ENCODE measurements at regions of chr17 and their contacts with region 1.

Region 1: DNA sequence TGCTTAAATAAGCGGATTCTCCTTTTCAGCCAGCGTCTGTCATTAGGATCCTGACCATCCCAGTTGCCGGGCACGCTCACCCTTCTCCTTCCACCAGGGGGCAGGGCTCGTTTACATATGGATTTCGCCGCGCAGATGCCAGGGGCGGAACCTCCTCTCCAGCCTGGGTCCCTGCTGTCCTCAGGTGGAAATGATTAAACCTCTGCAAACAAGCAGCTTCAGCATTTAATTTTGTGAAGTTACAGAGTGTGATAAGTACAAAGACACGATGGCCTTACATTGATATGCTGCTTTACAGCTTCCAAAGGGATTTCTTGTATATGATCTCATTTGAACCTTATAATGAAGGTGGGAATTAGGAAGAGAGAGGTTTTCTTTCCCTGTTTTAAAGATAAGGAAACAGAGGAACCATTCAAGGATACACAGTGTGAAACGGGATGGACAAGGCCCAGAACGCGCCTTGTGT is 3.9 kb upstream of the KRT28 start:
- DNase-seq: peak; percentile 47 to 88 (median 73)
- ATAC-seq: peak; percentile 100
- H3K4me3 ChIP-seq: no peak overlapping the region
- H3K27ac ChIP-seq: no peak overlapping the region
- H3K4me1 ChIP-seq: no peaks in the 10 kb centered on the region
- H3K27me3 ChIP-seq: peaks cover 20 to 82% of the 10 kb centered on the region in 2 donors
- CTCF ChIP-seq: peak; percentile 61 to 91

Region 2: DNA sequence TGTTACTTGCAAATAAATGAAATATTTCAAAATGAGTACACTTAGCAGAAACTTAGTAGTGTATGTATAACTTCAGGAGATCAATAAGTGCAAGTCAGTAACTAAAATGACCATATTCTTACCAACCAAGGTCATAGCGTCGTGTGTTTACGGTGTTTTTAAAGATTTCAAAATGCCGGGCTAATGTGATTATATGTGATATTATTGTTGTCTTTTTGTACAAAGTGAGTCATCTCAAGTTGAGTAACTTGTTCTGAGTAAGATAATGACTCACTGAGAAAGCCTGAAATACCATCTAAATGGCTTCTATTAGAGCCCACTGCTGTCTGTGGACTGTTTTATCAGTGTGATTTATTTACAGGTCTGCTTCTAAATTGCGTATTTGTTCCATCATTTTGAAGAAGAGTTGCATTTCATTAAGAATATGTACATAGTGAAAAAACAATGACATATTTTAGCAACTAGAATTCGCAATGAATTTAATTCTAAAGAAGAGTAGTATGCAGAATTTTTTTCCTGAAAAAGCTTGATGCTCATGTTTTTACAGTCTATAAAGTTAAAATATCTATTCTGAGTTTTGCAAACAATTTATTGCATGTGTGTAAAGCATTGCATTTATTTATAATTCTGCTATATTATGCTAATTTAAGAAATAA is 50.6 kb after region 1 on chr17:
- intact Hi-C with region 1: no loop called
- DNase-seq: no peak
- ATAC-seq: peak; percentile 73
- H3K4me3 ChIP-seq: no peak overlapping the region
- H3K27ac ChIP-seq: no peak overlapping the region
- H3K4me1 ChIP-seq: peaks cover 0 to 9% of the 10 kb centered on the region in 2 donors
- H3K27me3 ChIP-seq: no peaks in the 10 kb centered on the region
- CTCF ChIP-seq: no peak

Region 3: GRCh38 chr17:41665566-41666236 is 862.1 kb after region 1 on chr17:
- intact Hi-C with region 1: loop called in 1 of 2 experiments (anchors 10 kb)
- DNase-seq: peak in 3 of 4 donors; percentile 92 to 99 (median 92)
- ATAC-seq: peak; percentile 92
- H3K4me3 ChIP-seq: peak overlapping the region; percentile 39 to 44
- H3K27ac ChIP-seq: peak overlapping the region; percentile 81 to 88
- H3K4me1 ChIP-seq: peaks cover 11 to 42% of the 10 kb centered on the region in 2 donors
- H3K27me3 ChIP-seq: no peaks in the 10 kb centered on the region
- CTCF ChIP-seq: peak; percentile 97